Activated CD8-positive, alpha-beta T cell treated with anti-CD3 and anti-CD28 coated beads, Interleukin-2, amount 10 ng/mL, durations not matched to agents 7 days and 5 days (primary cell): ENCODE measurements at regions of chr1 and their contacts with region 1.

Region 1: GRCh38 chr1:25895365-25895993 is 10.7 kb downstream of the STMN1 start:
- DNase-seq: peak; percentile 93
- ATAC-seq: peak; percentile 97
- H3K4me3 Mint-ChIP-seq: no peak overlapping the region
- H3K27ac Mint-ChIP-seq: no peak overlapping the region
- H3K4me1 Mint-ChIP-seq: peaks cover 24% of the 10 kb centered on the region
- H3K27me3 Mint-ChIP-seq: no peaks in the 10 kb centered on the region

Region 2: DNA sequence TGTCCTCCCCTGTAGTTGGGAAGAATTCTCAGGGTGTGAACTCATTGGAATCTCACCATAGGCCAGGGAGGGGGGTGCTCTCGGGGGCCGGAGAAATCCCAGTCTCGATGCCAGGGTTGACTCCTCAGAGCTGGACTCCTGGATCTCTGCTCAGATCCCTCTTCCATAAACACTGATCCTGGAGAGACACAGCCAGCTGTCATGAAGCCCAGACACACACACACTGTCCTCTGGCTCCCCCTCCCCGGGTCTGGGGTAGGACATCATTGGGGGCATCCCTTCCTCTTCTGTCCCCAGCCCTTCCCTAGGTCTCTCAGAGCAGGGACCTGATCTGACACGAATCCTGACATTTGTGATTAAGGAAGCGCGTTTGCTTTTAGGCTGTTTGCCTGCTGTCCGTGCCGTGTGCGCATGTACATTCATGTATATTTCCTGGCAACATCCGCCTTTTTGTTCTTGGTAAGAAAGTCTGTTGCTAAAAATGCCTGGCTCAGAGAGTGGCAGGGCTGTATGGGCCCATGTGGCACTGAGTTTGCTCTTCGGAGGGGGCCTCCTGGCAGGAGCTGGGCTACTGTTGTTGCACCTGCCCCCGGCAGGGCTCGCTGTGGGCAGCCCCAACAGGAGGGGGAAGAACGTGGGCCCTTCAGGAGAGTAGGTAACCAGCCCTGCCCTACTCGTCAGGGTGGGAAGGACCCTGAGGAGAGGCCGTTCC is 140.9 kb before region 1 on chr1:
- CTCF ChIA-PET with region 1: no interaction called
- POLR2A ChIA-PET with region 1: no interaction called
- DNase-seq: no peak
- ATAC-seq: peak; percentile 6
- H3K4me3 Mint-ChIP-seq: no peak overlapping the region
- H3K27ac Mint-ChIP-seq: no peak overlapping the region
- H3K4me1 Mint-ChIP-seq: peaks cover 21% of the 10 kb centered on the region
- H3K27me3 Mint-ChIP-seq: peaks cover 2% of the 10 kb centered on the region

Region 3: GRCh38 chr1:25874934-25875855 is 20.3 kb before region 1 on chr1 and contains the start of gene PAQR7:
- CTCF ChIA-PET with region 1: interaction called, 17 read pairs
- POLR2A ChIA-PET with region 1: interaction called, 5 read pairs
- DNase-seq: peak; percentile 64
- ATAC-seq: peak; percentile 93
- H3K4me3 Mint-ChIP-seq: peak within 1 kb of the TSS; percentile 79
- H3K27ac Mint-ChIP-seq: peak within 1 kb of the TSS; percentile 60
- H3K4me1 Mint-ChIP-seq: peaks cover 11% of the 10 kb centered on the region
- H3K27me3 Mint-ChIP-seq: peaks cover 14% of the 10 kb centered on the region
- total RNA-seq, gene PAQR7: 3.2 to 3.3 TPM

Region 4: DNA sequence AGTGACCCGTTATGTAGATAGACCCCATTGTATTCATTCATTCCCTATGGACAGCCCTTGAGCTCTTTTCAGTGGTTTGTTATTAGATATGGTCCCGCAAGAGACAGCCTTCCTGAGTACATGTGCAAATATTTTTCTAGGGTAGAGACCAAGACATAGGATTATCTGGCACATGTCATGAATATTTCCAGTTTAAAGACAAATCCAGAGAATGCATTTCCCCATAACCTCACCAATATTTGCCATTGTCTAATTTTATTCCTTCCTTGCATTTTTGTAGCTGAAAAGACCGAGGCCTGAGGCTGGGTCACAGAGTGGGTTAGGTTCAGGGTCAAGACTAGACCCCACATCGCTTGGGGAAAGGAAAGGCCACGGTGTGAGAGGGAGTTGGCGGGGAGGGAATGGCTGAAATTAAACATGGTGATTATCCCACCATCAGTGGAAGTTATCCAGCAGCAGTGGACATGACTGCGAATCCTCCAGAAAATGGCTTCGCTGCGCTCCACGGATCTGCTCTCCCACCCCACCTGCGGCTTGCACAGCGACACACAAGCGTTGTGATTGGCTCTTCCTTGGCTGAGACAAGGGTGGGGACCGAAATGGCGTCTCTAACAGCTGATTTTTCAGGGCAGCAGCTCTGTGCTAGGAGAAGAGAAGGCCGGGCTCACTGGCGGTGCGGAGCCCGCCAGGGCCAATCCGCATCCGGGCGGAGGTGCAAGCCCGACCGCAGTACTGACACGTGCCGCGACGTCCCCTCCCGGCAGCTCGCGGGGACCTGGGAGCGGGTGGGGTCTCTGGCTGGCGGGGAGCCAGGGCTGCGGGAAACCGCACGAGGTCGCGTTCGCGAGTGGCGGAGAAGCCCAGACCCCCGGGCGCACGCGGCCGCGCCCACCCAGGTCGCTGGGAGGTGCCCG is 26.8 kb after region 1 on chr1:
- CTCF ChIA-PET with region 1: interaction called, 26 read pairs
- POLR2A ChIA-PET with region 1: no interaction called
- DNase-seq: peak; percentile 69
- ATAC-seq: peak; percentile 85
- H3K4me3 Mint-ChIP-seq: peak overlapping the region; percentile 77
- H3K27ac Mint-ChIP-seq: peak overlapping the region; percentile 41
- H3K4me1 Mint-ChIP-seq: peaks cover 41% of the 10 kb centered on the region
- H3K27me3 Mint-ChIP-seq: peaks cover 33% of the 10 kb centered on the region

Region 5: DNA sequence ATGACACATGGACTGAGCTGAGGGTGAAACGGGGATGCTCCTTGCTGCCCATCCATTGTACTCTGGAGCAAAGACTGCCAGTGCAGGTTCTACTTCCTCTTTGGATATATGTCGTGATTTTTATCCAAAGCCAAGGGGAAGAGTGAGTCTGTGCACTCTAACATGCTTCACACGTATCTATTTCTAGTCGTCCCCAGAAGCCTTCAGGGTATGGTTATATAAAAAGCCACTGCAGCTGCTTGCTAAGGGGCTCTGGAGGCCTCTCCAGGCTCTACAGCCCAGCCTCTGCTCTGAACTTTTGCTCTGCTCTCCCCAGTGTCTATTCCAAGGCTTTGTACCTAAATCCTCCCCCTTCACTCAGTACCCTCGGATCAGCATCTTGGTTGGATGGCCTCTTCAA is 82.3 kb after region 1 on chr1:
- CTCF ChIA-PET with region 1: interaction called, 12 read pairs
- POLR2A ChIA-PET with region 1: no interaction called
- DNase-seq: no peak
- ATAC-seq: no peak
- H3K4me3 Mint-ChIP-seq: no peak overlapping the region
- H3K27ac Mint-ChIP-seq: no peak overlapping the region
- H3K4me1 Mint-ChIP-seq: no peaks in the 10 kb centered on the region
- H3K27me3 Mint-ChIP-seq: no peaks in the 10 kb centered on the region

Region 6: DNA sequence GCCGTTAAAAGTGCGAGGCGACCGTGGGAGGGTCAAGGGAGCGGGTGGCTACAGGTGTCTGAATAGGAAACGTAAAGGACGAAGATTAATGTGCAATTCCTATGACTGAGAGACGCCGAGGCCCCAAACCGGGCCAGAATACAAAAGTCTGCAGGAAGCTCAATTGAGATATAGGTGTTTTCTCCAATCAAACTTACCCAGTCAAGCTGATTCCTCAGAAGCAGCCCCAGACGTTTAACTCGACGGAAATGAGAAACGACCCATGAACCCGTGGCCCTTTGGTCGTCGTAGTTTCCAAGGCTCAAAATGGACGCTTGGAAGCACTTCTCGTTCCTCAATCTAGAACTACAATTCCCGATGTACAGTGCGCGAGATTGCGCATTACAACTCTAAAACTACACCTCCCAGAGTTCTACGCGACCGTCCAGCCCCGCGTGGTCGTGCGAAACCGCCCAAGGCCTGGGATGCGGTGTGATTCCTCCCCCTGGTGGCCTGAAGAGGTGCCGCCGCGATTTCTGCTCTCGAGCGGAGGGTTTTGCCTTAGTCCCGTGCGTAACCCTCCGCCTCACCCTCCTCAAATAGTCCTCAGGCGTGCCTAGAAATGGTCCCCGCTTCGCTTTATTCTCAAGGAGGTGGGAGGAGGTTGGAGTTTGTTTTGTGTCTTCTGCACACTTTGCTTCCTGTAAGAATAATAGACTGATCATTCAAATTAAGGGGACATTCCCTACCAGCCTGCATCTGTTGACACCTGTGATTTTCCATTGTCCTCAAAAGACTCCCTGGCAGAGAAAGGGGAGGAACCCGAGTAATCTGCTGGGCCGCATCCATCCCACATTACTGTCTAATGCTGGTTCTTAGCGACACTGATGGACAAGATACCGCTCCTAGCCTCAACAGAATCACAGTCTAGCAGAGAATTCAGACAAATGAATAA is 102.6 kb after region 1 on chr1 and contains the start of gene PAFAH2:
- CTCF ChIA-PET with region 1: interaction called, 610 read pairs
- POLR2A ChIA-PET with region 1: interaction called, 48 read pairs
- DNase-seq: peak; percentile 99
- ATAC-seq: peak; percentile 97
- H3K4me3 Mint-ChIP-seq: peak within 1 kb of the TSS; percentile 93
- H3K27ac Mint-ChIP-seq: peak within 1 kb of the TSS; percentile 95
- H3K4me1 Mint-ChIP-seq: peaks cover 30% of the 10 kb centered on the region
- H3K27me3 Mint-ChIP-seq: no peaks in the 10 kb centered on the region
- total RNA-seq, gene PAFAH2: 9.1 to 10.9 TPM

Region 7: GRCh38 chr1:26035959-26036755 is 140.7 kb after region 1 on chr1:
- CTCF ChIA-PET with region 1: interaction called, 11 read pairs
- POLR2A ChIA-PET with region 1: no interaction called
- DNase-seq: peak; percentile 81
- ATAC-seq: peak; percentile 77
- H3K4me3 Mint-ChIP-seq: peak overlapping the region; percentile 91
- H3K27ac Mint-ChIP-seq: no peak overlapping the region
- H3K4me1 Mint-ChIP-seq: peaks cover 16% of the 10 kb centered on the region
- H3K27me3 Mint-ChIP-seq: peaks cover 21% of the 10 kb centered on the region